ENCODE measurements at regions of chr14 and their contacts with region 1.

Region 1: GRCh38 chr14:75906676-75907280 is 75.0 kb downstream of the TGFB3 start:
- DNase-seq: peak; percentile 76
- ATAC-seq: no peak
- H3K4me3 ChIP-seq: no peak overlapping the region
- H3K4me3 Mint-ChIP-seq: no peak overlapping the region
- H3K27ac ChIP-seq: no peak overlapping the region
- H3K27ac Mint-ChIP-seq: no peak overlapping the region
- H3K4me1 ChIP-seq: no peaks in the 10 kb centered on the region
- H3K4me1 Mint-ChIP-seq: no peaks in the 10 kb centered on the region
- H3K27me3 ChIP-seq: no peaks in the 10 kb centered on the region
- H3K27me3 Mint-ChIP-seq: no peaks in the 10 kb centered on the region
- CTCF ChIP-seq: peak; percentile 97

Region 2: GRCh38 chr14:75783184-75783583 is 123.6 kb before region 1 on chr14:
- CTCF ChIA-PET with region 1: no interaction called
- POLR2A ChIA-PET with region 1: no interaction called
- intact Hi-C with region 1: no loop called
- DNase-seq: no peak
- ATAC-seq: no peak
- H3K4me3 ChIP-seq: no peak overlapping the region
- H3K4me3 Mint-ChIP-seq: no peak overlapping the region
- H3K27ac ChIP-seq: no peak overlapping the region
- H3K27ac Mint-ChIP-seq: no peak overlapping the region
- H3K4me1 ChIP-seq: no peaks in the 10 kb centered on the region
- H3K4me1 Mint-ChIP-seq: no peaks in the 10 kb centered on the region
- H3K27me3 ChIP-seq: no peaks in the 10 kb centered on the region
- H3K27me3 Mint-ChIP-seq: no peaks in the 10 kb centered on the region
- CTCF ChIP-seq: no peak

Region 3: GRCh38 chr14:75896341-75896740 is 10.4 kb before region 1 on chr14:
- CTCF ChIA-PET with region 1: interaction called, 12 read pairs
- POLR2A ChIA-PET with region 1: no interaction called
- intact Hi-C with region 1: no loop called
- DNase-seq: no peak
- ATAC-seq: no peak
- H3K4me3 ChIP-seq: no peak overlapping the region
- H3K4me3 Mint-ChIP-seq: no peak overlapping the region
- H3K27ac ChIP-seq: no peak overlapping the region
- H3K27ac Mint-ChIP-seq: no peak overlapping the region
- H3K4me1 ChIP-seq: no peaks in the 10 kb centered on the region
- H3K4me1 Mint-ChIP-seq: no peaks in the 10 kb centered on the region
- H3K27me3 ChIP-seq: no peaks in the 10 kb centered on the region
- H3K27me3 Mint-ChIP-seq: no peaks in the 10 kb centered on the region
- CTCF ChIP-seq: no peak

Region 4: GRCh38 chr14:75917322-75917945 is 10.7 kb after region 1 on chr14:
- CTCF ChIA-PET with region 1: interaction called, 19 read pairs
- POLR2A ChIA-PET with region 1: no interaction called
- intact Hi-C with region 1: no loop called
- DNase-seq: no peak
- ATAC-seq: no peak
- H3K4me3 ChIP-seq: no peak overlapping the region
- H3K4me3 Mint-ChIP-seq: no peak overlapping the region
- H3K27ac ChIP-seq: no peak overlapping the region
- H3K27ac Mint-ChIP-seq: no peak overlapping the region
- H3K4me1 ChIP-seq: peaks cover 0 to 4% of the 10 kb centered on the region in 2 donors
- H3K4me1 Mint-ChIP-seq: peaks cover 8% of the 10 kb centered on the region
- H3K27me3 ChIP-seq: no peaks in the 10 kb centered on the region
- H3K27me3 Mint-ChIP-seq: no peaks in the 10 kb centered on the region
- CTCF ChIP-seq: no peak

Region 5: DNA sequence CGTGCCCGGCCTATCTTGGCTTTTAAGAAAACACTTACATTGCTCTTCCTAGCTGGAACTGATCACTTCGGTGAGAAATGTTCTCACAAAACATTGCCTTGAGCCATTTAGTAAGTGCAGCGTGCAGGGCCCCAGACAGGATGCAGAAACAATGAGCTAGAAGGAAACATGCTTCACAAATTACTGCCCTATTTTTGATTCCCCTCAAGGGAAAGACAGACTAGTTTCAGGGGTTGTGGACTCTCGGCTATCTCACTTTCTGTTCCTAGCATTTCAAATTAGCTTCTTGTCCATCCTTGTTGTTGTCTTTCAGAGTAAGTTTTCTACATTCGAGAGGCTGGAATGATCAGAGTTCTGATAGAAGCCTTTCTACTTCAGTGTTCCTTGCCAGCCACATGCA is 53.5 kb after region 1 on chr14:
- CTCF ChIA-PET with region 1: interaction called, 25 read pairs
- POLR2A ChIA-PET with region 1: no interaction called
- intact Hi-C with region 1: no loop called
- DNase-seq: peak; percentile 48
- ATAC-seq: peak; percentile 69
- H3K4me3 ChIP-seq: peak overlapping the region in 2 of 5 experiments; percentile 12 to 54
- H3K4me3 Mint-ChIP-seq: peak overlapping the region; percentile 78
- H3K27ac ChIP-seq: peak overlapping the region; percentile 69 to 90
- H3K27ac Mint-ChIP-seq: peak overlapping the region; percentile 93
- H3K4me1 ChIP-seq: peaks cover 33 to 36% of the 10 kb centered on the region in 2 donors
- H3K4me1 Mint-ChIP-seq: peaks cover 51% of the 10 kb centered on the region
- H3K27me3 ChIP-seq: no peaks in the 10 kb centered on the region
- H3K27me3 Mint-ChIP-seq: no peaks in the 10 kb centered on the region
- CTCF ChIP-seq: no peak